Left colon (tissue), 2 donors: ENCODE measurements at regions of chr3 and their contacts with region 1.

Region 1: GRCh38 chr3:3476669-3477068 is 297.2 kb upstream of the CRBN start:
- DNase-seq: no peak
- ATAC-seq: no peak

Region 2: GRCh38 chr3:3545360-3545759 is 68.7 kb after region 1 on chr3:
- intact Hi-C with region 1: loop called in 1 of 2 experiments (anchors 2 kb)
- DNase-seq: no peak
- ATAC-seq: no peak

Region 3: GRCh38 chr3:4011166-4011565 is 534.5 kb after region 1 on chr3:
- intact Hi-C with region 1: no loop called
- DNase-seq: no peak
- ATAC-seq: no peak